Activated CD4-positive, alpha-beta T cell treated with anti-CD3 and anti-CD28 coated beads for 36 hours (primary cell): ENCODE measurements at regions of chr11 and their contacts with region 1.

Region 1: GRCh38 chr11:13210424-13210823 is 67.2 kb upstream of the BMAL1 start:
- DNase-seq: peak; percentile 48
- ATAC-seq: no peak
- H3K4me3 Mint-ChIP-seq: no peak overlapping the region
- H3K27ac Mint-ChIP-seq: no peak overlapping the region
- H3K4me1 Mint-ChIP-seq: peaks cover 38% of the 10 kb centered on the region
- H3K27me3 Mint-ChIP-seq: peaks cover 2% of the 10 kb centered on the region

Region 2: DNA sequence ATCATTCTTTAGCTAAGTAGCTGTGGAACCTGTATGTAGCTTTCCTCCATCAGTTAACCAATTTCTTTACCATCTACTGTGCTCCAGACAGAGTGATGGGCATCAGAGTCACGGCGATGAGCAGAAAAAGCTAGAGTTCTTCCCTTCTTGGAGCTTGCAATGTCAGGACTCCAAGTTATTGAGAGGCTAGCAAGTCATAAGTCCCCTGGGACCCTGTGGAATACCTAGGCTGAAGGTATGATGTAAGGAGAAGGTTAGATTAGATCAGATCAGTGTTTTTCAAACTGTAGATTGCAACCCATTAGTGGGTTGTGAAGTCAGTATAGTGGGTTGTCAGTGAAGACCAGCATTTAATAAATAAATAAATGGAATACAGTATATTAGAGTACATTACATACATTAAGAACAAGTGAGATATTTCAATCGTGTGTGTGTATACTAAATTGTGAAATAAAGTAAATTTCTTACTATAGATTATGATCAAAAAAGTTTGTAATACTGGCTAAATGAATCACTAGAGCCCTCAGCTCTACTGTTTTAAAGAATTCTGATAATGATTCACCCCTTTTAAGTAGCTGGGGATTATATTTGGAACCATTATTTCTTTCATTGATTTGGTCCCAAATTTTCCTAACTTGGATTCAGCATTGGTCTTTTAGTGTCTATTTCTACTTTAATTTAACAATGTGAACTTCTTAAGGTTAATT is 149.0 kb before region 1 on chr11:
- CTCF ChIA-PET with region 1: no interaction called
- POLR2A ChIA-PET with region 1: no interaction called
- intact Hi-C with region 1: no loop called
- DNase-seq: no peak
- ATAC-seq: no peak
- H3K4me3 Mint-ChIP-seq: no peak overlapping the region
- H3K27ac Mint-ChIP-seq: no peak overlapping the region
- H3K4me1 Mint-ChIP-seq: no peaks in the 10 kb centered on the region
- H3K27me3 Mint-ChIP-seq: peaks cover 11% of the 10 kb centered on the region

Region 3: GRCh38 chr11:13183094-13183825 is 27.2 kb before region 1 on chr11:
- CTCF ChIA-PET with region 1: interaction called, 6 read pairs
- POLR2A ChIA-PET with region 1: interaction called, 3 read pairs
- intact Hi-C with region 1: loop called (anchors 1 kb)
- DNase-seq: peak; percentile 11
- ATAC-seq: peak; percentile 71
- H3K4me3 Mint-ChIP-seq: no peak overlapping the region
- H3K27ac Mint-ChIP-seq: no peak overlapping the region
- H3K4me1 Mint-ChIP-seq: peaks cover 10% of the 10 kb centered on the region
- H3K27me3 Mint-ChIP-seq: peaks cover 19% of the 10 kb centered on the region

Region 4: GRCh38 chr11:13238879-13239514 is 28.6 kb after region 1 on chr11:
- CTCF ChIA-PET with region 1: interaction called, 16 read pairs
- POLR2A ChIA-PET with region 1: no interaction called
- intact Hi-C with region 1: loop called in 1 of 2 experiments (anchors 2 kb)
- DNase-seq: peak; percentile 70
- ATAC-seq: peak; percentile 70
- H3K4me3 Mint-ChIP-seq: no peak overlapping the region
- H3K27ac Mint-ChIP-seq: no peak overlapping the region
- H3K4me1 Mint-ChIP-seq: no peaks in the 10 kb centered on the region
- H3K27me3 Mint-ChIP-seq: peaks cover 8% of the 10 kb centered on the region

Region 5: GRCh38 chr11:13276832-13277767 is 66.7 kb after region 1 on chr11:
- CTCF ChIA-PET with region 1: interaction called, 5 read pairs
- POLR2A ChIA-PET with region 1: no interaction called
- intact Hi-C with region 1: loop called in 1 of 2 experiments (anchors 1 kb)
- DNase-seq: peak; percentile 98
- ATAC-seq: peak; percentile 93
- H3K4me3 Mint-ChIP-seq: peak overlapping the region; percentile 87
- H3K27ac Mint-ChIP-seq: peak overlapping the region; percentile 84
- H3K4me1 Mint-ChIP-seq: peaks cover 43% of the 10 kb centered on the region
- H3K27me3 Mint-ChIP-seq: peaks cover 6% of the 10 kb centered on the region

Region 6: DNA sequence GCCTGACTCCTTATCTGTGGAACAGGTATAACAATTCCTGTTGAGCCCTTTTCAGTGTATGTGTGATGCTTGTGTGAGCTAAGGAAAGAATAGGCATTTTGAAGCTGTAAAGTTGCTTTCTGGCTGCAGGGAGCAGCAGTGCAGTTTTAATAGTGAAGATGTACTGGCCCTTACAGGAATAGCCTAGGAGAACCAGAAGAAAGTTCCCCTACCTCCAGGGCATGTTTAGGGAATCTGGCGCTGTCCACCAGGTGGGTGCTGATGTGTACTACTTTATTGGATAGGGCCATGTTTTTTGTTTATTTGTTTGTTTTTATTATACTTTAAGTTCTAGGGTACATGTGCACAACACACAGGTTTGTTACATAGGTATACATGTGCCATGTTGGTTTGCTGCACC is 78.7 kb after region 1 on chr11:
- CTCF ChIA-PET with region 1: interaction called, 5 read pairs
- POLR2A ChIA-PET with region 1: interaction called, 3 read pairs
- intact Hi-C with region 1: loop called in 1 of 2 experiments (anchors 5 kb)
- DNase-seq: no peak
- ATAC-seq: no peak
- H3K4me3 Mint-ChIP-seq: no peak overlapping the region
- H3K27ac Mint-ChIP-seq: no peak overlapping the region
- H3K4me1 Mint-ChIP-seq: peaks cover 80% of the 10 kb centered on the region
- H3K27me3 Mint-ChIP-seq: no peaks in the 10 kb centered on the region

Region 7: DNA sequence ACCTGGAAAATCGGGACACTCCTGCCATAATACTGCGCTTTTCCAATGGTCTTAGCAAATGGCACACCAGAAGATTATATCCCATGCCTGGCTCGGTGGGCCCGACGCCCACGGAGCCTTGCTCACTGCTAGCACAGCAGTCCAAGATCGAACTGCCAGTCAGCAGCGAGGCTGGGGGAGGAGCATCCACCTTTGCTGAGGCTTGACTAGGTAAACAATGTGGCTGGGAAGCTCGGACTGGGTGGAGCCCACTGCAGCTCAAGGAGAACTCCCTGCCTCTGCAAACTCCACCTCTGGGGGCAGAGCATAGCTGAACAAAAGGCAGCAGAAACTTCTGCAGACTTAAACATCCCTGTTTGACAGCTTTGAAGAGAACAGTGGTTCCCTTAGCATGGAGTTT is 269.8 kb after region 1 on chr11:
- CTCF ChIA-PET with region 1: no interaction called
- POLR2A ChIA-PET with region 1: no interaction called
- intact Hi-C with region 1: no loop called
- DNase-seq: no peak
- ATAC-seq: no peak
- H3K4me3 Mint-ChIP-seq: no peak overlapping the region
- H3K27ac Mint-ChIP-seq: no peak overlapping the region
- H3K4me1 Mint-ChIP-seq: no peaks in the 10 kb centered on the region
- H3K27me3 Mint-ChIP-seq: peaks cover 21% of the 10 kb centered on the region